ENCODE measurements at regions of chr17 and their contacts with region 1.

Region 1: GRCh38 chr17:68260051-68260762 is 12.4 kb downstream of the AMZ2 start:
- DNase-seq: no peak
- H3K4me3 ChIP-seq: no peak overlapping the region
- H3K27ac ChIP-seq: peak overlapping the region in 1 of 5 donors; percentile 34
- H3K4me1 ChIP-seq: peaks cover 0 to 52% (median 27%) of the 10 kb centered on the region in 4 donors
- H3K27me3 ChIP-seq: no peaks in the 10 kb centered on the region
- CTCF ChIP-seq: no peak
- EP300 ChIP-seq: no peak
- POLR2A ChIP-seq: no peak

Region 2: DNA sequence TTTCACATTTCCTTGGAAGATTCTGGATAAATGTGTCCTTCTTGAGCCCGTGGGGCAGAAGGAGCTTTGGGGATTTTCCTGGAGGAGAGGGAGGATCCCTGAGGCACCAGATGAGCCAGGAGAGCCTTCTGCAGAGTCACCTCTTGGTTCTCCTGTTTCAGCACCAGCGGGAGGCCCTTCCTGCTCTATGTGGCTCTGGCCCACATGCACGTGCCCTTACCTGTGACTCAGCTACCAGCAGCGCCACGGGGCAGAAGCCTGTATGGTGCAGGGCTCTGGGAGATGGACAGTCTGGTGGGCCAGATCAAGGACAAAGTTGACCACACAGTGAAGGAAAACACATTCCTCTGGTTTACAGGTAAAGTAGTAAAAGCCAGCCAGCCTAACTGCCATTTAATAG is 108.2 kb after region 1 on chr17:
- intact Hi-C with region 1: no loop called
- DNase-seq: no peak
- H3K4me3 ChIP-seq: no peak overlapping the region
- H3K27ac ChIP-seq: no peak overlapping the region
- H3K4me1 ChIP-seq: no peaks in the 10 kb centered on the region
- H3K27me3 ChIP-seq: no peaks in the 10 kb centered on the region
- CTCF ChIP-seq: no peak
- EP300 ChIP-seq: no peak
- POLR2A ChIP-seq: no peak

Region 3: GRCh38 chr17:68398691-68399637 is 138.8 kb after region 1 on chr17:
- intact Hi-C with region 1: loop called (anchors 10 kb)
- DNase-seq: peak; percentile 60 to 80
- H3K4me3 ChIP-seq: no peak overlapping the region
- H3K27ac ChIP-seq: no peak overlapping the region
- H3K4me1 ChIP-seq: peaks cover 5 to 14% (median 7%) of the 10 kb centered on the region in 4 donors
- H3K27me3 ChIP-seq: no peaks in the 10 kb centered on the region
- CTCF ChIP-seq: peak in 5 of 7 experiments; percentile 38 to 84 (median 69)
- EP300 ChIP-seq: no peak
- POLR2A ChIP-seq: no peak

Region 4: GRCh38 chr17:68435876-68436842 is 176.0 kb after region 1 on chr17:
- intact Hi-C with region 1: loop called (anchors 10 kb)
- DNase-seq: peak; percentile 83 to 91
- H3K4me3 ChIP-seq: no peak overlapping the region
- H3K27ac ChIP-seq: peak overlapping the region in 2 of 5 donors; percentile 83 to 84
- H3K4me1 ChIP-seq: peaks cover 22 to 54% (median 33%) of the 10 kb centered on the region in 4 donors
- H3K27me3 ChIP-seq: no peaks in the 10 kb centered on the region
- CTCF ChIP-seq: peak in 5 of 7 experiments; percentile 84 to 92 (median 90)
- EP300 ChIP-seq: no peak
- POLR2A ChIP-seq: no peak